Activated T-helper 1 cell treated with anti-CD3 and anti-CD28 coated beads, Interleukin-12 subunit alpha, Interleukin-12 subunit beta, Interleukin-2, Interleukin-4 antibody, amounts not matched to agents 30 ng/mL and 10 ng/mL and 1 ng/mL, durations not matched to agents 14 hours and 24 hours and 36 hours (primary cell): ENCODE measurements at regions of chr2 and their contacts with region 1.

Region 1: GRCh38 chr2:109128048-109128465 is 948 bp upstream of the SH3RF3 start:
- DNase-seq: peak; percentile 21
- H3K4me3 Mint-ChIP-seq: peak overlapping the region; percentile 59
- H3K27ac Mint-ChIP-seq: no peak overlapping the region
- H3K4me1 Mint-ChIP-seq: peaks cover 22% of the 10 kb centered on the region
- H3K27me3 Mint-ChIP-seq: peaks cover 50% of the 10 kb centered on the region

Region 2: GRCh38 chr2:108855194-108855593 is 272.9 kb before region 1 on chr2:
- intact Hi-C with region 1: loop called (anchors 5 kb)
- DNase-seq: no peak
- H3K4me3 Mint-ChIP-seq: no peak overlapping the region
- H3K27ac Mint-ChIP-seq: no peak overlapping the region
- H3K4me1 Mint-ChIP-seq: peaks cover 7% of the 10 kb centered on the region
- H3K27me3 Mint-ChIP-seq: no peaks in the 10 kb centered on the region

Region 3: DNA sequence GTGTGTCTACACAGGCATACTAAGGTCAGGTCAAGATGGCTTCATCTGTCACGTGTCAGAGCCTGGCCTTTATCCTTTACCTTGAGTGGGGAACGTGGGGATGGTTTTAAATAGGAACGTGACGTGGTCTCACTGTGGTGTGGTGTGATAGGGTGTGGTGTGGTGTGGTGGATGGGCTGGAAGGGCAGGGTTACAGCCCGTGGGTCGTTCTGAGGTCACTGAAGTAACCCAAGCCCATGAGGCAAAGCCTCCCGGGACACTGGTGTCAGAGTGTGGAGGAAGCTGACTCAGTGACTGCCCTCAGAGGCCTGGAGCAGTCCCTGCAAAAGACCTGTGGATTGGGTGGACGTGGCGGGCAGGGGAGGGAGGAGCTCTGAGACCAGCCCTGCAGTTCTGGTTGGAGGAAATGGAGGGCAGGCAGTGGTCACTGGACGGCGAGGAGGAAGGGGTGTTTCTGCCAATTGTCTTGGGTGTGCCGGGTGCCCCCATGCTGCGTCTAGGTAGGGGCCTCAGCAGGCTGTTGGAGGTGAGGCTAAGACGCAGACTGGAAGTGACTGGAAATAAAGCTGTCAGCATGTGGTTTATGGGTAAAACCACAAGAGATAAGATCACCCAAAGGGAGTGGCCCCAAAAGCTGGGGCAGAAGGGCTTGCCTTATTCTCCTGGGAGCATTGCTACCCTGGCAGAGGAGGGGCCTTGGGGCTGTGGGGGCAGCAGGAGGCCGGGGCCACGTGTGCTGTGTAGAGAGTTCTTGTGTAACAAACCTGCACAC is 85.8 kb after region 1 on chr2:
- intact Hi-C with region 1: loop called (anchors 2 kb)
- DNase-seq: peak; percentile 74
- H3K4me3 Mint-ChIP-seq: peak overlapping the region; percentile 72
- H3K27ac Mint-ChIP-seq: peak overlapping the region; percentile 93
- H3K4me1 Mint-ChIP-seq: peaks cover 82% of the 10 kb centered on the region
- H3K27me3 Mint-ChIP-seq: peaks cover 68% of the 10 kb centered on the region

Region 4: GRCh38 chr2:109348671-109349550 is 220.9 kb after region 1 on chr2:
- intact Hi-C with region 1: loop called (anchors 5 kb)
- DNase-seq: no peak
- H3K4me3 Mint-ChIP-seq: peak overlapping the region; percentile 21
- H3K27ac Mint-ChIP-seq: peak overlapping the region; percentile 6
- H3K4me1 Mint-ChIP-seq: peaks cover 15% of the 10 kb centered on the region
- H3K27me3 Mint-ChIP-seq: peaks cover 23% of the 10 kb centered on the region

Region 5: DNA sequence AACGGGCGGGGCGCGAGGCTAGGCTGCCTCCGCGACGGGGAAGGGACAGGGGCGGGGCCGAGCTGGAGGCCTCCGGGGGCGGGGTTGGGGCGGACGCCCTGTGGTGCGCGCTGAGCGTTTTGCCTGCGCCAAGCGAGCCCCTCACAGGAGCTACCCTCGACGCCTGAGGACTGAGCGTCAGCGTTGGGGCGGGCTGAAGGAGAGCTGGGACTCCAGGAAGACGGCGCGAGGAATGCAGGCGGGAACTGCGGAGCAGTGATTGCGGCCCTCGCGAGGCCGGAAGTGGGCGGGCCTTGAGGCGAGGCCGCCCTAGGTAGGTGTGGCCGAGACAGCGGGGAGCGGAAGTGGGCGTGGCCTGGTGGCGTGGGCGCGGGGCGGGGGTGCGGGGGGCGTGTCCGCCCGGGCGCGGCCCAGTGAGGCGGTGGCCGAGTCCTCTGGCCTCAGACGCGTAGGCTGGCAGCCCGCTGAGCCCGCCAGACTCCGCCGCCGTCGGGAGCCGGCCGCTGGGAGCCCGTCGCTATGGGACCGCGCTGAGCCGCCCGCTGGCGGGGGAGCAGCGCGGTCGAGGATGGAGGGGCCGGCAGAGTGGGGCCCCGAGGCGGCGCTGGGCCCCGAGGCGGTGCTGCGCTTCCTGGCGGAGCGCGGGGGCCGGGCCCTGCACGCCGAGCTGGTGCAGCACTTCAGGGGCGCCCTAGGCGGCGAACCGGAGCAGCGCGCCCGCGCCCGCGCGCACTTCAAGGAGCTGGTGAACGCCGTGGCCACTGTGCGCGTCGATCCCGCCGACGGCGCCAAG is 486.1 kb after region 1 on chr2 and contains the starts of genes SEPTIN10 and SOWAHC:
- intact Hi-C with region 1: loop called (anchors 5 kb)
- DNase-seq: peak; percentile 72
- H3K4me3 Mint-ChIP-seq: peak within 1 kb of the TSS; percentile 80
- H3K27ac Mint-ChIP-seq: peak within 1 kb of the TSS; percentile 75
- H3K4me1 Mint-ChIP-seq: peaks cover 8% of the 10 kb centered on the region
- H3K27me3 Mint-ChIP-seq: peaks cover 64% of the 10 kb centered on the region
- total RNA-seq, gene SEPTIN10: 0.13 and 0.66 TPM in 2 replicates
- total RNA-seq, gene SOWAHC: 0.24 and 0.31 TPM in 2 replicates